HepG2 (cell line): ENCODE measurements at regions of chr9 and their contacts with region 1.

Region 1: DNA sequence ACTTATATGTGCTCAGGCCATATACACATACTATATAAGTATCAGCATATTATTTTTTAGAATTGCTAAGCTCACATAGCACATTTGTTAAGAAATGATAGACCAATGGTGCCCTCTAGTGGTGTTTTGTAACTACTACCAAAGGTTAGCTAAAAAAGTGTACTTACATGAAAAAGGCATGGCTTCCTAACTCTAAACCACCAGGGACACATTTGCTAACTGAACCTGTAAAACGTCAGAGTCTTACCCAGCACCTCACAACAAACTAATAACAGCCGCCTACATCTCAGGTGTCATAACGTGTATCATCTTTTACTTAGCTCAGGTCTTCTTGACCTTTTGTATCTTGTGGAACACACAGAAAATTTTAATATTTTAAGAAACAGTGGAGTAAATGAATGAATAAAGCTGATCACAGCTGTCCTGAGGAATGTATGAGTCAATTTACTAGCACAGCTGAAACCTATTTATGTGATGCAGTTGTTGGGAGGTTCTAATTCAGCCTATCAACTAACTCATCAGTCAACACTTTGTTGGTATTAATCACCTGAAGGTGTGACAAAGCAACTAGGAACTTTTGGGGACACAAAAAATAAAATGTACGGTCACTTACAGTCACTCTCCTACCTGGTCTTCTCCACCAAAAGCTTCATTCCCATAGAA is 72.9 kb downstream of the BAAT start:
- DNase-seq: peak; percentile 93
- ATAC-seq: peak; percentile 47
- H3K4me3 ChIP-seq: no peak overlapping the region
- H3K27ac ChIP-seq: peak overlapping the region; percentile 27
- H3K4me1 ChIP-seq: peaks cover 55% of the 10 kb centered on the region
- H3K27me3 ChIP-seq: no peaks in the 10 kb centered on the region
- CTCF ChIP-seq: peak; percentile 87
- EP300 ChIP-seq: no peak
- POLR2A ChIP-seq: no peak
- RAD21 ChIP-seq: peak; percentile 94

Region 2: DNA sequence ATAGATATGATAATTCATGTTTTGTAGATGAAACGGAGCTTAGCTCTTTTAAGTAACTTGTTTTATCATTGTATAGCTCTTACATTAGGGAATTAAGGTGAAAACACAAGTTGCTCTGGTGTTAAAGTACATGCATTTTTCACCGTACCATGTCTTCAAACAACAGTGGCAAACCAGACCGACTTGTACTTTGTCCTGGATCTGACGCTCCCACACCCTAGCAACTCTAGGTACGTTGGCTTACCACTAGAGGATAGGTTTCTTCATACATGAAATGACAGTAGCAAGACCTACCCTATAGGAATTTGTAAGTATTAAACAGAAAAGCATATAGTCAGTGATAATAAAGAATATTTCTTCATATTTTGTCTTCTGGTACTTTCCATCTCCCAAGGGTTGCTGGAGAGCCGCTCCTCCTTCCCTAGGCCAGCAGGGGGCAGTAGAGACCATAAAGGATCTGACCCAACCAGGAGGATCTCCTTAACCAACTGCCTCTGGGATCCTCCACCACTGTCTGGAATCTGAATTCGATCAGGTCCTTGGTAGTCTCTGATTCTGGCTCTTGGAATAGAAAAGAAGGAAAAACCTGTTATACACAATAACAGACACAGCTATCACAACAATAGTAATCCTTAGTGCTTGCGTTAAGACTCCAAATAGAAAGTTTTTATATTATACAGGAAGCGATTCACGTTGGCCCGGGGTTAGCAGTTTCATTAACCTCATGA is 597.4 kb before region 1 on chr9:
- CTCF ChIA-PET with region 1: interaction called, 22 read pairs
- POLR2A ChIA-PET with region 1: no interaction called
- in situ Hi-C with region 1: loop called (anchors 5 kb)
- intact Hi-C with region 1: loop called (anchors 1 kb)
- DNase-seq: peak; percentile 48
- ATAC-seq: peak; percentile 91
- H3K4me3 ChIP-seq: no peak overlapping the region
- H3K27ac ChIP-seq: no peak overlapping the region
- H3K4me1 ChIP-seq: no peaks in the 10 kb centered on the region
- H3K27me3 ChIP-seq: no peaks in the 10 kb centered on the region
- CTCF ChIP-seq: peak; percentile 82
- EP300 ChIP-seq: no peak
- POLR2A ChIP-seq: no peak
- RAD21 ChIP-seq: peak; percentile 37; the same call in 1 of the 2 replicates

Region 3: GRCh38 chr9:101235105-101235866 is 76.6 kb before region 1 on chr9:
- CTCF ChIA-PET with region 1: no interaction called
- POLR2A ChIA-PET with region 1: no interaction called
- in situ Hi-C with region 1: no loop called
- intact Hi-C with region 1: loop called (anchors 1 kb)
- DNase-seq: peak; percentile 45
- ATAC-seq: peak; percentile 81
- H3K4me3 ChIP-seq: no peak overlapping the region
- H3K27ac ChIP-seq: no peak overlapping the region
- H3K4me1 ChIP-seq: peaks cover 30% of the 10 kb centered on the region
- H3K27me3 ChIP-seq: no peaks in the 10 kb centered on the region
- CTCF ChIP-seq: peak; percentile 68
- EP300 ChIP-seq: no peak
- POLR2A ChIP-seq: no peak
- RAD21 ChIP-seq: peak; percentile 47

Region 4: GRCh38 chr9:101387871-101388506 is 76.1 kb after region 1 on chr9:
- CTCF ChIA-PET with region 1: interaction called, 65 read pairs
- POLR2A ChIA-PET with region 1: interaction called, 23 read pairs
- in situ Hi-C with region 1: no loop called
- intact Hi-C with region 1: loop called (anchors 1 kb)
- DNase-seq: peak; percentile 86
- ATAC-seq: peak; percentile 97
- H3K4me3 ChIP-seq: no peak overlapping the region
- H3K27ac ChIP-seq: peak overlapping the region; percentile 41
- H3K4me1 ChIP-seq: peaks cover 81% of the 10 kb centered on the region
- H3K27me3 ChIP-seq: no peaks in the 10 kb centered on the region
- CTCF ChIP-seq: peak; percentile 88
- EP300 ChIP-seq: peak in 1 of 2 experiments; percentile 58; a peak in 1 of 4 replicates
- POLR2A ChIP-seq: no peak
- RAD21 ChIP-seq: peak; percentile 81

Region 5: GRCh38 chr9:101458955-101459631 is 147.2 kb after region 1 on chr9:
- CTCF ChIA-PET with region 1: interaction called, 12 read pairs
- POLR2A ChIA-PET with region 1: interaction called, 3 read pairs
- in situ Hi-C with region 1: no loop called
- intact Hi-C with region 1: loop called (anchors 1 kb)
- DNase-seq: peak; percentile 86
- ATAC-seq: peak; percentile 95
- H3K4me3 ChIP-seq: no peak overlapping the region
- H3K27ac ChIP-seq: no peak overlapping the region
- H3K4me1 ChIP-seq: peaks cover 52% of the 10 kb centered on the region
- H3K27me3 ChIP-seq: no peaks in the 10 kb centered on the region
- CTCF ChIP-seq: peak; percentile 91
- EP300 ChIP-seq: no peak
- POLR2A ChIP-seq: no peak
- RAD21 ChIP-seq: peak; percentile 80

Region 6: GRCh38 chr9:101787891-101788290 is 476.0 kb after region 1 on chr9:
- CTCF ChIA-PET with region 1: no interaction called
- POLR2A ChIA-PET with region 1: no interaction called
- in situ Hi-C with region 1: no loop called
- intact Hi-C with region 1: no loop called
- DNase-seq: no peak
- ATAC-seq: no peak
- H3K4me3 ChIP-seq: no peak overlapping the region
- H3K27ac ChIP-seq: no peak overlapping the region
- H3K4me1 ChIP-seq: no peaks in the 10 kb centered on the region
- H3K27me3 ChIP-seq: no peaks in the 10 kb centered on the region
- CTCF ChIP-seq: no peak
- EP300 ChIP-seq: no peak
- POLR2A ChIP-seq: no peak
- RAD21 ChIP-seq: no peak